Naive thymus-derived CD4-positive, alpha-beta T cell (primary cell): ENCODE measurements at regions of chr17 and their contacts with region 1.

Region 1: GRCh38 chr17:5513610-5514009 is 27.2 kb downstream of the MIS12 start:
- DNase-seq: peak in 7 of 9 donors; percentile 27 to 62 (median 57)
- ATAC-seq: peak; percentile 78
- H3K4me3 ChIP-seq: no peak overlapping the region
- H3K4me3 Mint-ChIP-seq: peak overlapping the region; percentile 4 to 73 (median 57)
- H3K27ac ChIP-seq: peak overlapping the region; percentile 36
- H3K27ac Mint-ChIP-seq: peak overlapping the region; percentile 14 to 89 (median 78)
- H3K4me1 ChIP-seq: peaks cover 21 to 23% of the 10 kb centered on the region in 2 donors
- H3K4me1 Mint-ChIP-seq: peaks cover 27 to 47% (median 36%) of the 10 kb centered on the region in 7 donors
- H3K27me3 ChIP-seq: no peaks in the 10 kb centered on the region
- H3K27me3 Mint-ChIP-seq: no peaks in the 10 kb centered on the region

Region 2: DNA sequence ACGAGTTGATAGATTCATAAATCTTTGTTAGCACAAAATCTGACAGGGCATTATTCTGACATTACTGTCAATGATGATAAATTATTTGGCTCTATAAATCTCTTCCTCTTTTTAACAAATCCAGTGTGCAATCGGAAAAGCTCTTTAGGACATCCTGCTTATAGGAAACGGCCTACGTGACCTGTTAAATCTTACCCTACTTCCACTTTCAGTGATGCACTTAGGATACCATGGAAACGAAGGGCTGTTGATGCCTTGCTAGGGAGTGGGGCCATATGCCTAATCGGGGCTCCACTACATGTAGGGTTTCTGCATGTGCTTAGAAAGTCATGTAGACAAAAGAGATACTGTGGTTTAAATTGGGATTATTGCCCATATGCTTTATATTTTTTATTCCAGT is 349.2 kb before region 1 on chr17:
- CTCF ChIA-PET with region 1: no interaction called
- POLR2A ChIA-PET with region 1: no interaction called
- intact Hi-C with region 1: no loop called
- DNase-seq: no peak
- ATAC-seq: peak; percentile 44
- H3K4me3 ChIP-seq: no peak overlapping the region
- H3K4me3 Mint-ChIP-seq: no peak overlapping the region
- H3K27ac ChIP-seq: no peak overlapping the region
- H3K27ac Mint-ChIP-seq: no peak overlapping the region
- H3K4me1 ChIP-seq: no peaks in the 10 kb centered on the region
- H3K4me1 Mint-ChIP-seq: no peaks in the 10 kb centered on the region
- H3K27me3 ChIP-seq: no peaks in the 10 kb centered on the region
- H3K27me3 Mint-ChIP-seq: peaks cover 4 to 25% (median 9%) of the 10 kb centered on the region in 5 donors

Region 3: DNA sequence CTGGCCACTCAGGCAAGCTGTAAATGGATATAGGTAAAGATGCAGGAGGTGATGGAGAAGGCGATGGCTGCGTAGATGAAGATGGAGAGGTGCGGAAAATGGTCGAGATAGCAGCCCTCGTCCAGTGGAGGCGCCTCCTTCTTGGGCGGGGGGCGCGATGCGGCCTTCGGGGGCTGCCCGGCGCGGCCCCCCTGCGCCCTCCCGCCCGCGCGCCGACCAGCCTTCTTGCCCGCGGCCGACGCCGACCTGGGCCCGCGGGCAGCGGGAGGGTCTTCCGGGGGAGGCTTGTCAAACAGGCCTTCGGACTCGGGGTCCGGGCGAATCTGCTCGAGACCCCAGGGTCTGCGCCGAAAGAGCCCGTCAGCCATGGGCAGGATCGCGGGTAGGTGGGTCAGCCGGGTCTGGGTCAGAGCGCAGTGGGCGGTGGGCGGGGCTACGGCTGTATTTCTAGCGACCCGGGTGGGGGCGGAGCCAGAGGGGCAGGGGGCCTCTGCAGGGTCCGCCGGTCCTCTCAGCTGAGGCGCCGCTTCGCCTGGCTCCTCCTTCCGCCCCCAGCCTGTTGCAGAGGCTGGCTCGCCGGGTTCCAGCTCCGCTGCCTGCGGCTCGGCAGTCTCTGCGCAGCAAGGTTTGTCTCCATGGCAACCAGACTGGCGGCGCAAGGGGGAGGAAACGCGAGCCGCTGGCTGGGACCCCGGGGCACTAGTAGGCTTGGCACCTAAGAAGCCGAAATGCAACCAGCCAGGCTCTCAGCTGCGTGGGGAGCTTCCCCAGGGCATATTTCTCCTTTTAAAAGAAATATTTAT is 12.8 kb before region 1 on chr17:
- CTCF ChIA-PET with region 1: no interaction called
- POLR2A ChIA-PET with region 1: interaction called, 9 read pairs
- intact Hi-C with region 1: loop called in 1 of 2 experiments (anchors 1 kb)
- DNase-seq: peak; percentile 54 to 85 (median 75)
- ATAC-seq: peak; percentile 94
- H3K4me3 ChIP-seq: peak overlapping the region; percentile 45
- H3K4me3 Mint-ChIP-seq: peak overlapping the region; percentile 91 to 99 (median 97)
- H3K27ac ChIP-seq: peak overlapping the region; percentile 69
- H3K27ac Mint-ChIP-seq: peak overlapping the region; percentile 69 to 99 (median 88)
- H3K4me1 ChIP-seq: peaks cover 0 to 6% of the 10 kb centered on the region in 2 donors
- H3K4me1 Mint-ChIP-seq: peaks cover 7 to 30% (median 24%) of the 10 kb centered on the region in 7 donors
- H3K27me3 ChIP-seq: no peaks in the 10 kb centered on the region
- H3K27me3 Mint-ChIP-seq: peaks cover 0 to 7% (median 0%) of the 10 kb centered on the region in 5 donors